ENCODE measurements at regions of chr19 and their contacts with region 1.

Region 1: GRCh38 chr19:40139533-40140287 is 49.0 kb upstream of the ZNF780A start:
- DNase-seq: peak; percentile 55
- H3K4me3 ChIP-seq: no peak overlapping the region; a peak in 1 of 4 replicates
- H3K27ac ChIP-seq: no peak overlapping the region
- H3K4me1 ChIP-seq: no peaks in the 10 kb centered on the region
- H3K27me3 ChIP-seq: peaks cover 35% of the 10 kb centered on the region; the same call in 1 of the 2 replicates
- CTCF ChIP-seq: peak; percentile 84
- EP300 ChIP-seq: no peak
- RAD21 ChIP-seq: peak; percentile 97

Region 2: DNA sequence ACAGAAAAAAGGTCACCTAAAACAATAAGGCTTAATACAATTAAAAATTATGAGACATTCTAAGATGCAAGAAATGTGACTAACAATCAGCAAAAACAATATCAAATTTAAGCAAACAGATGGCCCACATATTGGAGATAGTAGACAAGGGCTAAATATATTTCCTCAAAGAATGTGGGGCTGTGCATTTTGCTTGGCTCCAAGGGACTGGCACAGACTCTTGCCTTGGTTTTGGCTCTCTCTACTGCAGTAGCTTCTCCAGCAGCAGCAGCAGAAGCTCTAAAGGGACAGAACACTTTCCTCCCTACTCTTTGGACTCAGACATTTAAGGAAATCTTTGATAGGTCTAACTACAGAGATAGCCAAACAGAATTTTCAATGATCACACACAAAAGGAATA is 10.7 kb before region 1 on chr19:
- CTCF ChIA-PET with region 1: interaction called, 30 read pairs
- POLR2A ChIA-PET with region 1: no interaction called
- DNase-seq: no peak
- H3K4me3 ChIP-seq: no peak overlapping the region
- H3K27ac ChIP-seq: no peak overlapping the region
- H3K4me1 ChIP-seq: no peaks in the 10 kb centered on the region
- H3K27me3 ChIP-seq: no peaks in the 10 kb centered on the region
- CTCF ChIP-seq: no peak
- EP300 ChIP-seq: no peak
- RAD21 ChIP-seq: no peak

Region 3: DNA sequence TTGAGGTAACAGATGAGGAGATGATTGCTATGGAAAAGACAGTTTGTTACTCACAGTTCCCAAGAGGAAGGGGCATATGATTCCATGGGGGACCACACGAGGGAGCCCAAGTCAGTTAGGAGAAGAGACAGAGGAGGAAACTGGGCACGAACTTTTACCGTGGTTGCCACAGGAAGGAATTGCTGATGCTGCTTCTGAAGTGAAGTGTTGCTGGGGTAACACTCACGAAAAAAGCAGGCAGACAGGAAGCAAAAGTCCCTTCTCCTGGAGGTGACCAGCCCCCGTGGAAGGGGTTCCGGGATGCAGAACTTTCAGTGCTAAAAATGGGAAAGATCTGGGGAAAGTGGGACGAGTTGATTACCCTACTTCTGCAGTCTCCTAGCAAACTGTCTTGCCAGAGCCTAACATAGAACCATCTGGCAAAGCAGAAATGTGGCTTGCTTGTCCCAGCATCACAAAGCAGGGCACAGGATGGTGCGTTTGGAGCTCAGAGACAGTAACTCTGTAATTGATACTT is 16.1 kb after region 1 on chr19:
- CTCF ChIA-PET with region 1: interaction called, 17 read pairs
- POLR2A ChIA-PET with region 1: no interaction called
- DNase-seq: no peak
- H3K4me3 ChIP-seq: no peak overlapping the region
- H3K27ac ChIP-seq: no peak overlapping the region
- H3K4me1 ChIP-seq: no peaks in the 10 kb centered on the region
- H3K27me3 ChIP-seq: no peaks in the 10 kb centered on the region
- CTCF ChIP-seq: peak; percentile 39; the same call in 1 of the 2 replicates
- EP300 ChIP-seq: no peak
- RAD21 ChIP-seq: peak; percentile 35

Region 4: DNA sequence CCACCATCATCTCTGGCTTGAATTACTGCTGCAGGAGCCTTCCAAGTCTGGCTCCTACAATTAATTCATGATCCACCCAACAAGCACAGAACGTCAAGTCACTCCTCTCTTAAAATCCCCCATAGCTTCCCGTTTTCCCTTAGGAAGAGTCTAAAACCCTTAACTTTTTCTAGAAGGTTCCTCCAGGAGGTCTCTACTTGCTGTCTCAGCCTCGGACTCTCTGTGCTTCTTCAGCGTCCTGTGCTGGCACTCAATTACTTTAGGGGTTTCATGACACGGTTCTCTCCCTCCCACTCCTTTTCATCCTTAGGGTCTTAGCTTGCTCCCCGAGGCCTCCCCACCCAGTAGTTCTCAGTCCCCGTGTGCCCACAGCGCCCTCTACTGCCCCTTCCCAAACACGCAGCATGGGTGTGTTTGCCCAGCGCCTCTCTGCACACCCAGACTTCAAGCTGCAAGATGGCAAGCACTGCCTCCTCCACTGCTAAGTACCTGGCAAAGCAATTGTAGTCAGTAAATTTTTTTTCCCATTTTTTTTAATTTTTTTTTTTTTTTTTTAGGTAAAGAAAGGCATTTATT is 25.7 kb after region 1 on chr19:
- CTCF ChIA-PET with region 1: interaction called, 20 read pairs
- POLR2A ChIA-PET with region 1: no interaction called
- DNase-seq: peak; percentile 72
- H3K4me3 ChIP-seq: no peak overlapping the region; a peak in 1 of 4 replicates
- H3K27ac ChIP-seq: no peak overlapping the region
- H3K4me1 ChIP-seq: no peaks in the 10 kb centered on the region
- H3K27me3 ChIP-seq: no peaks in the 10 kb centered on the region
- CTCF ChIP-seq: peak; percentile 73
- EP300 ChIP-seq: no peak
- RAD21 ChIP-seq: peak; percentile 58

Region 5: GRCh38 chr19:40200341-40201099 is 60.8 kb after region 1 on chr19:
- CTCF ChIA-PET with region 1: interaction called, 15 read pairs
- POLR2A ChIA-PET with region 1: no interaction called
- DNase-seq: no peak
- H3K4me3 ChIP-seq: no peak overlapping the region
- H3K27ac ChIP-seq: no peak overlapping the region
- H3K4me1 ChIP-seq: no peaks in the 10 kb centered on the region
- H3K27me3 ChIP-seq: no peaks in the 10 kb centered on the region
- CTCF ChIP-seq: no peak
- EP300 ChIP-seq: no peak
- RAD21 ChIP-seq: no peak

Region 6: GRCh38 chr19:40208602-40209001 is 68.9 kb after region 1 on chr19:
- CTCF ChIA-PET with region 1: interaction called, 10 read pairs
- POLR2A ChIA-PET with region 1: no interaction called
- DNase-seq: no peak
- H3K4me3 ChIP-seq: no peak overlapping the region
- H3K27ac ChIP-seq: no peak overlapping the region
- H3K4me1 ChIP-seq: no peaks in the 10 kb centered on the region
- H3K27me3 ChIP-seq: no peaks in the 10 kb centered on the region
- CTCF ChIP-seq: no peak
- EP300 ChIP-seq: no peak
- RAD21 ChIP-seq: no peak

Region 7: DNA sequence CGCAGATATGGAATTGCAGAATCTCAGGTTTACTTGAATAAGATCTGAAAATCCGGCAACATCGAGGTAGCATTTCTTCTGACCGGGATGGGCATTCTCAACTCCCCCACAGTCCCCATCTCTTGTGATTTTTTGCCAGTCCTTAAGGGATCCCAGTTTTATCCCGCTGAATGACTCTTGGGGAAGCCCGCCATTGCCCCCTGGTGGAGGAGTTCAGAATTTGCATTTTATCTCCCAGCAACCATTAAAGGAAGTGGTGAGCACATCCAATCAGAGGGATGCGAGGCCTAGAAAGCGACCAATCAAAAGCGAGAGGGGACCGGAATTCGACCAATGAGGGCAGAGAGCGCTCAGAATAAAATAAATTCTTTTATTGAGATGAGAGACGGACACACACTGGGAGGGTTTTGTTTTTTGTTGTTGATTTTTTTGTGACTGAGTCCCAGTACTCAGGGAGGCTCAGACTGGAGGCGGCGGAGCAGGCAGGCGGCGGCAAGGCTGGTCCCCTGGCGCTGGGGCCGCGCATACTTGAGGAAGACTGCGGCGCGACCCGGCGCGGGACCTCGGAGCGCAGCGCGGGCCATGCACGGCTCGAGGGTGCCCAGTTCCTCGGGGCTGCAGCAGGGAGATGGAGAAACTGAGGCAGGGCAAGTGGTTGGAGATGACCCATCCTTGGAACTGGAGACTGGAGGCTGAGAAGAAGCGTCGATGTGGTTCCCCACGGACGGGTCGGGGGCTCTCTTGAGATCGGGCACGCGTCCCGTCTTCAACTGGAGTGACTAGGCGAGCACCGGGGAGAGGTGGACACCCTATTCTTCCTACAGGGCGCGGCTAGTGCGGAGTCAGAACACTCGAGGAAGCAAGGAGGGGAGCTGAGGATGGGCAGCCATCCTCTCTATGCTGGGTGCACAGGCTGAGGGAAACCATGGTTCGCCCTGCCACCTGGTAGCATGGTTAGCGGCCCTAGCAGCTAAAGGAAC is 82.4 kb after region 1 on chr19:
- CTCF ChIA-PET with region 1: interaction called, 41 read pairs
- POLR2A ChIA-PET with region 1: no interaction called
- DNase-seq: peak; percentile 95
- H3K4me3 ChIP-seq: no peak overlapping the region
- H3K27ac ChIP-seq: no peak overlapping the region
- H3K4me1 ChIP-seq: no peaks in the 10 kb centered on the region; a peak in 2 of 4 replicates
- H3K27me3 ChIP-seq: no peaks in the 10 kb centered on the region
- CTCF ChIP-seq: peak; percentile 86
- EP300 ChIP-seq: peak in 1 of 2 experiments; percentile 13; a peak in 1 of 4 replicates
- RAD21 ChIP-seq: peak; percentile 82

Region 8: DNA sequence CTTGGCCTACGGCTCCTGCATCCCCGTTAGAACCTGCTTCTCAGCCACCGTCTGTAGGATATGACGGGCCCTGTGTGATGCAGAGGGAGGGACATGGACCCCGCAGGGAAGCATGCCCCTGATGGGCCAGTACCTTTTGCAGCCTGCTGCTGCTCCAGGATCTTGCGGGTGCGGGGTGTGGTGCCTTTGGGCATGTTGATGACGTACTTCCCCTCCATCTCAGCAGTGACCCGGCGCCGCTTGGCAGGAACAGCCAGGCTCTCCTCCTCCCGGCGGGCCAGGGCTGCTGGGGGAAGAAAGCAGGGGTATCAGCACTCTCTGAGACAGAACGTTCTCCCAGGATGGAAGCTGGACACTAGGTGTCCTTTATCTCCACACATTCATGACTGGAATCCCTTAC is 186.5 kb after region 1 on chr19:
- CTCF ChIA-PET with region 1: no interaction called
- POLR2A ChIA-PET with region 1: no interaction called
- DNase-seq: no peak
- H3K4me3 ChIP-seq: no peak overlapping the region
- H3K27ac ChIP-seq: no peak overlapping the region
- H3K4me1 ChIP-seq: no peaks in the 10 kb centered on the region; a peak in 1 of 4 replicates
- H3K27me3 ChIP-seq: no peaks in the 10 kb centered on the region
- CTCF ChIP-seq: no peak
- EP300 ChIP-seq: no peak
- RAD21 ChIP-seq: no peak